ENCODE measurements at regions of chr3 and their contacts with region 1.

Region 1: GRCh38 chr3:167380004-167380689 is at the start of gene ZBBX:
- DNase-seq: peak; percentile 70
- ATAC-seq: peak; percentile 98
- H3K4me3 ChIP-seq: peak within 1 kb of the TSS in 1 of 3 experiments; percentile 55; a peak in 1 of 6 replicates
- H3K27ac ChIP-seq: no peak within 1 kb of the TSS
- H3K4me1 ChIP-seq: peaks cover 12% of the 10 kb centered on the region
- H3K27me3 ChIP-seq: no peaks in the 10 kb centered on the region
- CTCF ChIP-seq: peak; percentile 91
- EP300 ChIP-seq: no peak
- POLR2A ChIP-seq: no peak
- RAD21 ChIP-seq: peak; percentile 64
- total RNA-seq, gene ZBBX: not detected in 2 replicates

Region 2: GRCh38 chr3:167318991-167319615 is 61.0 kb before region 1 on chr3:
- CTCF ChIA-PET with region 1: no interaction called
- POLR2A ChIA-PET with region 1: no interaction called
- in situ Hi-C with region 1: no loop called
- intact Hi-C with region 1: no loop called
- DNase-seq: no peak
- ATAC-seq: no peak
- H3K4me3 ChIP-seq: no peak overlapping the region
- H3K27ac ChIP-seq: no peak overlapping the region
- H3K4me1 ChIP-seq: no peaks in the 10 kb centered on the region
- H3K27me3 ChIP-seq: no peaks in the 10 kb centered on the region
- CTCF ChIP-seq: no peak
- EP300 ChIP-seq: no peak
- POLR2A ChIP-seq: no peak
- RAD21 ChIP-seq: no peak

Region 3: GRCh38 chr3:167406875-167407492 is 26.8 kb after region 1 on chr3:
- CTCF ChIA-PET with region 1: no interaction called
- POLR2A ChIA-PET with region 1: no interaction called
- in situ Hi-C with region 1: no loop called
- intact Hi-C with region 1: no loop called
- DNase-seq: peak; percentile 56
- ATAC-seq: peak; percentile 99
- H3K4me3 ChIP-seq: no peak overlapping the region
- H3K27ac ChIP-seq: no peak overlapping the region
- H3K4me1 ChIP-seq: no peaks in the 10 kb centered on the region
- H3K27me3 ChIP-seq: no peaks in the 10 kb centered on the region
- CTCF ChIP-seq: peak; percentile 76
- EP300 ChIP-seq: no peak
- POLR2A ChIP-seq: no peak
- RAD21 ChIP-seq: peak; percentile 65

Region 4: GRCh38 chr3:167740961-167741587 is 360.9 kb after region 1 on chr3:
- CTCF ChIA-PET with region 1: no interaction called
- POLR2A ChIA-PET with region 1: no interaction called
- in situ Hi-C with region 1: no loop called
- intact Hi-C with region 1: loop called (anchors 1 kb)
- DNase-seq: peak; percentile 43
- ATAC-seq: peak; percentile 97
- H3K4me3 ChIP-seq: no peak overlapping the region
- H3K27ac ChIP-seq: no peak overlapping the region
- H3K4me1 ChIP-seq: peaks cover 49% of the 10 kb centered on the region
- H3K27me3 ChIP-seq: no peaks in the 10 kb centered on the region; a peak in 1 of 5 replicates
- CTCF ChIP-seq: peak; percentile 69
- EP300 ChIP-seq: no peak
- POLR2A ChIP-seq: no peak
- RAD21 ChIP-seq: peak; percentile 31; the same call in 1 of the 2 replicates

Region 5: DNA sequence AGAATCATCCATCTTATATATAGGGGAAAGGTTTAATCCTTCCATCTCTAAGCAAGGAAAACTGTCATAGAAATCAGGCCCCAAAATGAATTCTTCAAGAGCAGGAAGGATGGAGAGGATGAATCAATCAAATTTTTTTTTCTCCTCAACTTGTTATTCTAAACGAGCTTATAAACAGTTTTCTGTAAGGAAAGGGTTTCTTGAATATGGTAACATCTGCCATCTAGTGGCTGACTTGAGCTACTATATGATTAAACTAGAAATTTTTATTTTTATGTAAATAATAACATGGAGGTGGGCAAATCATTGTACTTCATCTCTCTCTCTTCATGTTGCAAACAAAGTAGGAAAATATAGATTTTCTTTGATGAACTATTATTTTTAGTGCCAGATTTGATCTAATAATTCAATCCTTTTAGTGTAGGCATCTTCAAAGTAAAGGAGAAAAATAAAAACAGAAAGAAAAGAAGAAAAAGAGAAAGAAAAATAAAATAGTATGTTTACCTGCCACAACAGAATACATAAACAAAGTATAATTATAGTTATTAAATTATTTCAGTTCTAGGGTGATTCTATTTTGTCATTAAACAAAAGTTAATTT is 502.0 kb after region 1 on chr3:
- CTCF ChIA-PET with region 1: interaction called, 10 read pairs
- POLR2A ChIA-PET with region 1: no interaction called
- in situ Hi-C with region 1: no loop called
- intact Hi-C with region 1: loop called (anchors 1 kb)
- DNase-seq: peak; percentile 30
- ATAC-seq: 0 out of 3 replicates have a peak, but pooled peaks have one; percentile 31
- H3K4me3 ChIP-seq: no peak overlapping the region
- H3K27ac ChIP-seq: no peak overlapping the region
- H3K4me1 ChIP-seq: peaks cover 10% of the 10 kb centered on the region
- H3K27me3 ChIP-seq: no peaks in the 10 kb centered on the region; a peak in 1 of 5 replicates
- CTCF ChIP-seq: peak; percentile 50
- EP300 ChIP-seq: no peak
- POLR2A ChIP-seq: no peak
- RAD21 ChIP-seq: no peak

Region 6: DNA sequence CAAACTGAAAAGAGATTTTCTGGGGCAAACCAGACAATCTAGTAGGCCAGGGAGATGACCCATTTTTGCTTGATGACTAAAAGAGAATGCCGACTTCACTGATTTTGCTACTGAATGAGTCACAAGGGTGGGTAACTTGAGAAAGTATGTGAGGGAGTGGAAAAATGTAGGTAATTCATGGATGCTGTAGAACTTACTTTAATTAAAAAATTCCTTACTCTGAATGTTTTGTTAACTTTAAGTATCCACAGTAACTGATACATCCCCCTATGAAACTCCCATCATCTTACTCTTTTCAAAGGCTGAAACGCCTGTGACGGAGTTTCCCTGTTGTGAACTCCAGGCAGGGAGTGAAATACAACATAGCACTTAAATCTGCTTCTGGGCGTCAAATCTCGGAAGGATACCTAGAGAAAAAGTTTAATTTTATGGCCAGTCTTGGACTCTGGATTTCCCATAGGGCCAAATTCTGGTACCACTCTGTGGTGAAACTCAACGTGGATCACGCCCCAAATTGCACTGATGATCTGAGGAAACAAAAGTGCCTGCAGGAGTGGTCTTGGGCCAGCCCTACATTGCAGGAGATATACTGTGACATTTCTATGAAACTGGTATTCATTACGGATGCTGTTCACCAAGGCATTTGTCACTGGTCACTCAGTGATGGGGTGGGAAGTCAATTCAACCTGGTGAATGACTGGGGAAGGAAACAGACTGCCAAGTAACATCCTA is 691.6 kb after region 1 on chr3:
- CTCF ChIA-PET with region 1: no interaction called
- POLR2A ChIA-PET with region 1: no interaction called
- in situ Hi-C with region 1: no loop called
- intact Hi-C with region 1: no loop called
- DNase-seq: no peak
- ATAC-seq: no peak
- H3K4me3 ChIP-seq: no peak overlapping the region
- H3K27ac ChIP-seq: no peak overlapping the region
- H3K4me1 ChIP-seq: no peaks in the 10 kb centered on the region
- H3K27me3 ChIP-seq: no peaks in the 10 kb centered on the region; a peak in 1 of 5 replicates
- CTCF ChIP-seq: no peak
- EP300 ChIP-seq: no peak
- POLR2A ChIP-seq: no peak
- RAD21 ChIP-seq: no peak